Cardiac septum (tissue), 1 donor: ENCODE measurements at regions of chr10 and their contacts with region 1.

Region 1: DNA sequence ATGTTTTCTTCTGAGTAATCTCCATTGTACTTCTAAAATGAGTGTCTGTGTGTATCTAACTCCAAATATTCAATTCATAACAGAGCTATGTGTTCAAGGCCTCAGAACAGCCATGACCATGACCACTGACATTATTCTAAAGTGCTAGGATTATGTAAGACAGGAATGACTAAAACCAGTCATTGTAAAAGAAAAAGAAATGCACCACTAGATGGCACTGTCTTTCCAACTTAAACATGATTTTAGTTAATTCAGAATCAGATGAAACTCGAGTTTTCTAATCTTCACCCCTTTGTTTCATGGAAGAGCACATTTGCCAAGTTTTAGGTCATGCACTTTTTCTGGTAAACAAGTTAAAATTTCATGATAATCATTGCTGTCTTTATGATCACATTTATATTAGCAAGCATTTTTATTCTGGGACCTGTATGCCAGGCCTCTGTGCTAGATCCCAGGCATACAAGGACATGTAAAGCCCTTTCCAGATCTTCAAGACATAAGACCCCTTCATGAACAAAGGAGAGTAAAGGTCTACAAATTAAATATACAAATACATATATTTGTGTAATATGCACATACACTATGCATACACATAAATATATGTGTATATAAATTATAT is 26.1 kb upstream of the RSU1 start:
- DNase-seq: no peak

Region 2: GRCh38 chr10:16765509-16766375 is 77.6 kb before region 1 on chr10:
- intact Hi-C with region 1: no loop called
- DNase-seq: no peak

Region 3: DNA sequence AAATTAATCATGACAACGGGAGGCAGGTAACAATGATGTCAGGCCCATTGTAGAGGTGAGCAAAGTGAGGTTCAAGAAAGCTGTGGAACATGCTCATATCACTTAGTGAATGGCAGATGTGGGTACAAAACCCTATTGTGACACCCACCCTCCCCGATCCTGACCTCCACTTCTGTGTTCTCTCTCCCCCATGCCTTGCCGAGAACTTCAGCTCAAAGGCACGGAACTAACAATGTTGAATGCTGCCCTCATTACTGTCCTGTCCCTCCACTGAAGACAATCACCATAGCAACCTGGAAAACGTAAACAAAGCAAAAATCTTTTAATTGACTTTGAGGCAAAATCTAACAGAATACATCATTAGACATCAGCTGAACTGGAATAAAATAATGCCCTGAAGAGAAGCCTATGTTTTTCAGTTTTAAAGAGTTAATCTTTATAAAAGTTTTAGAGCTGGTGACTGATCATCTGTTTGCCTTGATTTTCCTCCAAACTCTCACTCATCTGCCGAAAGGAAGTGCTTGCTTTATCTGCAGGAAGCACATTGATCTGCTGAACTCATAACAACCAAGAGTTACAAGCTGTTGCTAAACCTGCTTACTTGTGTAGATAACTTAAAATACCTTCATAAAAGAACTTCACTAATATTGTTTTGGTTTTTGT is 152.6 kb after region 1 on chr10:
- intact Hi-C with region 1: loop called (anchors 10 kb)
- DNase-seq: no peak

Region 4: DNA sequence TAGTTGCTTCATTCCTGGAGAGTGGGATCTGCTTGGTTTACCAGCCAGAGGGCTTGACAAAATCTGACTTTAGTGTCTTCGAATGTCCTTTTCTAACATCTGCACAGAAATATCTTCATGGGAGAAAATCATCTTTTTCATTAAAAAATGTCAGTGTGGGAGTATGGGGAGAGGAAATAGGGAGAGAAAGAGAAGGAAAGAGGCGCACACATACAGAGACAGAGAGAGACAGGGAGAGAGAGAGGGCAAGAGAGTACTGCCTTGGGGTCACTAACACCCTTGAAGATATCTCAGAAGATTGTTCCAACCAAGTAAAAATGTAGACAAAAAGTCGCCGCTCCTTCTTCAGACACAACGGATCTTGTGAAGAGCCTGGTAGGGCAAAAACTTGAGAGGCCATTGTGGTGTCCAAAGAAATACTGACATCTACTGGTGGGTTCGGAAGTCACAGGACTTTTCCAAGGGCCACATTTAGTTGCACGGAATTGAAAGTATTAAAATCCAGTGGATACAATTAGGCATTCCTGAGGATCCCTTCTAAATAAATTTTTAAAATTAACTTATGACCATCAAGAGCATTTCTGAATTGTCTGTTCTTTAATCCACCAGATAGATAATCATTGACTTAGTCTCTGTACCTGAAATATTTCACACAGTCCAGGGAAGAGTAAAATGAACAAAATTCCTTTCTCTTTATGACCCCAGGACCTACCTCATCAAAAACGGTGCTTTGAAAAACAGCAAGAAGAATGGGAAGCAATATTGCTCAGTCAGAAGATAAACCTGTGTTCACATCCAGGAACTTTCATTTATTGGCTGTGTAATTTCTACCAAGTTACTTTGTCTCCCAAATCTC is 414.3 kb after region 1 on chr10:
- intact Hi-C with region 1: loop called (anchors 1 kb)
- DNase-seq: no peak